Caco-2 (cell line): ENCODE measurements at regions of chr14 and their contacts with region 1.

Region 1: DNA sequence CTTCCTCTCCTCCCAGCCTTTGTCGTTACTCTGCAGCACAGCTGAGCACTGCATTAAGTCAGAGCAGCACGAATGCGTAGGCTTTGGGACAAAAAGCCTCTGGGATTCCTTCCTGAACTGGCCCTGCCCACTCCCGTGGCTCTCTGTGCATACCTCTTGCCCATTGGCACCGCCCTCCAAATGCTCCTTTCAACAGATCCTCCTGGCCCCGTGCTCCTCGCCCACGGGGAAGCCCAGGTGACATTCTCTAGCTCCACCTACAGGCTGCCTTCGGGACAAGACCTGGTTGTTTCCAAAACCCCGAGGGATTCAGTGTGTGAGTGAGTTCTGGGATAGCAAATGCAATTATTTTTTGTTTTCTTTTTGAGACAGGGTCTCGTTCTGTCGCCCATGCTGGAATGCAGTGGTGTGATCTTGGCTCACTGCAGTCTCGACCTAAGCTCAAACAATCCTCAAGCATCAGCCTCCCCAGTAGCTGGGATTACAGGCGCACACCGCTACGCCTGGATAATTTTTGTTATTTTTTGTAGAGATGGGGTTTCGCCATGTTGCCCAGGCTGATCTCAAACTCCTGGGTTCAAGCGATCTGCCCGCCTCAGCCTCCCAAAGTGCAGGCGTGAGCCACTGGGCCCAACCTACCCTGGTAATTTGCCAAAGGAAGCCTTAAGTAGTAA is 17.9 kb upstream of the TDRD9 start:
- DNase-seq: peak; percentile 80 to 84
- H3K4me3 ChIP-seq: no peak overlapping the region
- H3K4me3 Mint-ChIP-seq: peak overlapping the region; percentile 15
- H3K27ac Mint-ChIP-seq: peak overlapping the region; percentile 35
- H3K4me1 ChIP-seq: no peaks in the 10 kb centered on the region
- H3K4me1 Mint-ChIP-seq: peaks cover 6% of the 10 kb centered on the region
- H3K27me3 ChIP-seq: no peaks in the 10 kb centered on the region
- H3K27me3 Mint-ChIP-seq: no peaks in the 10 kb centered on the region
- CTCF ChIP-seq: peak; percentile 83 to 89

Region 2: DNA sequence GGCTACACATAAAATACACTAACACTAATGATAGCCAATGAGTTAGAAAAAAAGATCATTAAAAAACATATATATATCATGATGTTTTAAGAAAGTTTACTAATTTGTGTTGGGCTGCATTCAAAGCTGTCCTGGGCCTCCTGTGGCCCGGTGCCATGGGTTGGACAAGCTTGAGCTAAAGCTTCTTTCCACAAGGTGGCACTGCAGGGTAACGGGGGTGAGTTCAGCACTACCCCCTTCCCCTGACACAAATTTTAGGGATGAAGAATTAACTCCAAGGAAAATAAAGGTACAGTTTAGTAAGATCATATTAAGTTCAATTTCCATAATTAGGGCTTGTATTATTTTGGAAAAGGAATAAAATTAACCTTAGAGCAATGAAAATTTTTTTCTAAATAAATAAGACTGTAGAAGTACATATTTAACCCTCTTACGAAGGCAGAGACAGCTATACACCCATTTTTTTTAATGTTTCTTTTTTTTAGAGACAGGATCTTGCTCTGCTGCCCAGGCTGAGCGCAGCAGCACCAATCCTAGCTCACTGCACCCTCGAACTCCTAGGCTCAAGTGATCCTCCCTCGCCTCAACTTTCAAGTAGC is 101.9 kb before region 1 on chr14:
- CTCF ChIA-PET with region 1: interaction called, 46 read pairs
- POLR2A ChIA-PET with region 1: no interaction called
- intact Hi-C with region 1: loop called (anchors 1 kb)
- DNase-seq: peak; percentile 69 to 85
- H3K4me3 ChIP-seq: no peak overlapping the region
- H3K4me3 Mint-ChIP-seq: no peak overlapping the region
- H3K27ac Mint-ChIP-seq: no peak overlapping the region
- H3K4me1 ChIP-seq: no peaks in the 10 kb centered on the region
- H3K4me1 Mint-ChIP-seq: no peaks in the 10 kb centered on the region
- H3K27me3 ChIP-seq: no peaks in the 10 kb centered on the region
- H3K27me3 Mint-ChIP-seq: no peaks in the 10 kb centered on the region
- CTCF ChIP-seq: peak; percentile 87 to 90

Region 3: DNA sequence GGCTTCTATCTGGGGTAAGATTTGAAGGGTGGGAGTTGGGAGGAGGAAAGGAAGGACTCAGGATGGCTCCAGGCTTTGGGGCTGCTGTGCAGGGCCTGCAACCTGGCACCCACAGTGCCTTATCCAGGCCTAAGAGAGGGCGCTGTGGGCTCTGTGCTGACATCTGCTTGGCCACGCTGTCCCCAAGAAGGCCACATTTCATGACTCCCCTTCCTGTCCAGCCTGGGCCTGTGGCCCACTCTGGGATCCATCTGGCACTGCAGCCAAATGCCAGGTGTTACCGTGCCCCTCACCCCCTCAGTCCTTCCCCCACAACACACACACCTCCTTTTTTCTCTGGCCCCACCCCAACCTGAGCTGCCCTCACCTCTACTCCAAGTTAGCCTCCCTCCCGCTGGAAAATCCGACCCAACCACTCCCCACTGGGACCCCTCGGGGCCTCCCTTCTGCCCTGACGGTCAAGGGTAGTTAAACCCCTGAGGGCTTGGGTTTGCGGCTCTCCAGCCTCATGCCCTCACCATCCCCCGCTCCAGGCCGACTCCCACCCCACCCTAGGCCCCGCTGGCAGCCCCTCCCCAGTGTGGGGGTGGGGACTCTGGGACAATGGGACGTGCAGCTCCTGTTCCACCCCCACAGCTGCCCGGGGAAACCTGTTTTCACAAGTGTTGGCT is 55.2 kb before region 1 on chr14:
- CTCF ChIA-PET with region 1: no interaction called
- POLR2A ChIA-PET with region 1: no interaction called
- intact Hi-C with region 1: no loop called
- DNase-seq: peak; percentile 55 to 56
- H3K4me3 ChIP-seq: no peak overlapping the region
- H3K4me3 Mint-ChIP-seq: no peak overlapping the region
- H3K27ac Mint-ChIP-seq: no peak overlapping the region
- H3K4me1 ChIP-seq: peaks cover 14% of the 10 kb centered on the region
- H3K4me1 Mint-ChIP-seq: peaks cover 8% of the 10 kb centered on the region
- H3K27me3 ChIP-seq: no peaks in the 10 kb centered on the region
- H3K27me3 Mint-ChIP-seq: no peaks in the 10 kb centered on the region
- CTCF ChIP-seq: no peak

Region 4: GRCh38 chr14:103894723-103895059 is 15.7 kb before region 1 on chr14:
- CTCF ChIA-PET with region 1: no interaction called
- POLR2A ChIA-PET with region 1: no interaction called
- intact Hi-C with region 1: no loop called
- DNase-seq: no peak
- H3K4me3 ChIP-seq: no peak overlapping the region
- H3K4me3 Mint-ChIP-seq: no peak overlapping the region
- H3K27ac Mint-ChIP-seq: no peak overlapping the region
- H3K4me1 ChIP-seq: no peaks in the 10 kb centered on the region
- H3K4me1 Mint-ChIP-seq: no peaks in the 10 kb centered on the region
- H3K27me3 ChIP-seq: no peaks in the 10 kb centered on the region
- H3K27me3 Mint-ChIP-seq: no peaks in the 10 kb centered on the region
- CTCF ChIP-seq: no peak